Activated CD4-positive, alpha-beta memory T cell treated with anti-CD3 and anti-CD28 coated beads, Interleukin-2, amount 10 ng/mL, durations not matched to agents 7 days and 5 days (primary cell): ENCODE measurements at regions of chr2 and their contacts with region 1.

Region 1: DNA sequence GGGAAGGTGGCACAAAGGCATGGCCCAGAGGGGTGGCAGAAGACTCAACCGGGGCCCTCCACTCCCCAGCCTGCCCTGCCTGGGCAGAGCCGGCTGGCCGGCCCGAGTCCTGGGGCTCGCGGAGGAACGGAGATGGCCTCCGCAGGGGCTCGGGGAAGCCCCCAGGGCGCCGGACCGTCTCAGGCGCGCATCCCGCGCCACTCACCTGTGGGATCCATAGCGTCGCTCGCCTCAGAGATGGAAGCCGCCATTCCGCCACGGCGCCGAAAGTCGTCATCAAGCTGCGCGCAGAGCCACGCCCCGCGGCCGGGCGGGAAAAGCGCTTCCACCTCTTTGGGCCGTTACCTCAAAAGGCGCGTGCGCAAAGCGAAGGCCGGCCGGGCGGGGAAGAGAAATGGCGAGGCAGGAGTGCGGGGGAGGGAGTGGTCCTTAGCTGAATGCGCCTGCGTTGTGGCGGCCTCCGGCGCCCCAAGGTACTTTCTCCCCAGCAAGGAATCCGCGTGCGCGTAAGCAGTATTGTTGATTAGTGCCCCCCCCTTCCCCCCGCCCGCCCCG is at the start of gene SMPD4:
- DNase-seq: peak; percentile 96
- H3K4me3 Mint-ChIP-seq: peak within 1 kb of the TSS; percentile 92
- H3K27ac Mint-ChIP-seq: peak within 1 kb of the TSS; percentile 93
- H3K4me1 Mint-ChIP-seq: peaks cover 44% of the 10 kb centered on the region
- H3K27me3 Mint-ChIP-seq: no peaks in the 10 kb centered on the region
- total RNA-seq, gene SMPD4: 56.5 to 58.2 TPM

Region 2: DNA sequence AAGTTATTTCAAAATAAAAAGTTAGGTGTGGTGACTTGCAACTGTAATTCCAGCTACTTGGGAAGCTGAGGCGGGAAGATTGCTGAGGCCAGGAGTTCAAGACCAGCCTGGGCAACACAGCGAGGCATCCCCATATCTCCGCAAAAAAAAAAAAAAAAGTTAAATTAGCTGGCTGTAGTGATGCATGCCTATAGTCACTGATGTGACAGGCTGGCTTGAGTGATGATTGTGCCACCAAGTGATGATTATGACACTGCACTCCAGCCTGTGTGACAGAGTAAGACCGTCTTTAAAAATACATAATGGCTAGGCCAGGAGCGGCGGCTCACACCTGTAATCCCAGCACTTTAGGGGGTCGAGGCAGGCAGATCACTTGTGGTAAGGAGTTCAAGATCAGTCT is 11.5 kb before region 1 on chr2:
- CTCF ChIA-PET with region 1: interaction called, 6 read pairs
- POLR2A ChIA-PET with region 1: interaction called, 18 read pairs
- DNase-seq: no peak
- H3K4me3 Mint-ChIP-seq: no peak overlapping the region
- H3K27ac Mint-ChIP-seq: peak overlapping the region; percentile 61
- H3K4me1 Mint-ChIP-seq: peaks cover 42% of the 10 kb centered on the region
- H3K27me3 Mint-ChIP-seq: no peaks in the 10 kb centered on the region

Region 3: DNA sequence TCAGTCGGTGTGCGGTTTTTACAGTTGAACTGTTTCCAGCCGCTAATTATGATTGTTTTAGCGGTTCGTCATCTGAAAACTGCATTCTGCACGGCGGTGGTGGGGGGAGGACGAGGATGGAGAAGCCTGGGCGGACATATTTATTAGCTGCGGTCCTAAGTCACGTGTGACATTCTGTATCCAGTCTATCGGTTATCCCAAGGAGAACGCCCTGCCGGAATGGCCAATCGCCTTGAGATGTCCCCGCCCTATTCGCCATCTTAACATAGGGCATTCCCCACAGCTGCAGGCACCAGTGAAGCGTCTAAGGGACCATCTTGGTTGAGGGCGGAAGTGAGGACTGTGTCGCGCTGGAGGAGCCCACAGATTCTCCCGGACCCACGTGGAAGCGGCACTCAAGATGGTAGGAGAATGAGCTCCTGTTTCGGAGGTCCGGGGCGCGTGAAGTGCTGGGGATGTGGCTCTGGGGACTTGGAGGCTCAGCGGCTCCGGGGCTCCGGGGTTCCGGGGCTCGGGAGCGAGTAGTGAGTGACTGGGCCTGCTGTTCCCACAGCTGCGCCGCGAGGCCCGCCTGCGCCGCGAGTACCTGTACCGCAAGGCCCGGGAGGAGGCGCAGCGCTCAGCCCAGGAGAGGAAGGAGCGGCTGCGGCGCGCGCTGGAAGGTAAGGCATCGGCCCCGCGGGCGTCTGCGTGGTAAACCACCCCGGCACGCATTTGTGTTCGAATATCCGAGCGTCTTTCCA is 161.3 kb after region 1 on chr2 and contains the start of gene IMP4:
- CTCF ChIA-PET with region 1: interaction called, 23 read pairs
- POLR2A ChIA-PET with region 1: interaction called, 58 read pairs
- DNase-seq: peak; percentile 97
- H3K4me3 Mint-ChIP-seq: peak within 1 kb of the TSS; percentile 99
- H3K27ac Mint-ChIP-seq: peak within 1 kb of the TSS; percentile 96
- H3K4me1 Mint-ChIP-seq: peaks cover 42% of the 10 kb centered on the region
- H3K27me3 Mint-ChIP-seq: no peaks in the 10 kb centered on the region
- total RNA-seq, gene IMP4: 57.7 to 58.9 TPM